ENCODE measurements at regions of chr12 and their contacts with region 1.

Region 1: GRCh38 chr12:96061864-96062453 is 26.6 kb upstream of the LTA4H start:
- DNase-seq: peak; percentile 82
- H3K4me3 Mint-ChIP-seq: no peak overlapping the region
- H3K27ac Mint-ChIP-seq: no peak overlapping the region
- H3K4me1 Mint-ChIP-seq: no peaks in the 10 kb centered on the region
- H3K27me3 Mint-ChIP-seq: no peaks in the 10 kb centered on the region
- CTCF ChIP-seq: peak; percentile 72

Region 2: DNA sequence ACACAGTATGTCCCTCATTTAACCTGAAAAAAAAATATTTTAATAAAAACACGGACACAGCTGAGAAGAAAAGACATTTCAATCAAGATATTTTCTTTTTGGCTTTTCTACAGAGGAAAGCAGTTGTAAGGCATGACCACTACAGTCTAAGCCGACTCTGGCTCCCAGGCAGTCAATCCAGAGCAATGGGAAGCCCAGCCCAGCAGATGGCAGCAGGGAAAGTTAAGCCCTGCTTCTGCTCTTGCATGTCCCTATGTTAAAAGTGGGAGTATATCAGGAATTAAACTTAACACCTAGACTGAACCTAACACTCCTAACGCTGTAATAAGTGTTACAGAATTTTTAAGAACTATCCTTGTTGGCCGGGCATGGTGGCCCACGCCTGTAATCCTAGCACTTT is 46.3 kb before region 1 on chr12:
- CTCF ChIA-PET with region 1: interaction called, 6 read pairs
- intact Hi-C with region 1: loop called (anchors 1 kb)
- DNase-seq: peak; percentile 49
- H3K4me3 Mint-ChIP-seq: no peak overlapping the region
- H3K27ac Mint-ChIP-seq: no peak overlapping the region
- H3K4me1 Mint-ChIP-seq: no peaks in the 10 kb centered on the region
- H3K27me3 Mint-ChIP-seq: no peaks in the 10 kb centered on the region
- CTCF ChIP-seq: peak; percentile 48